Esophagus squamous epithelium (tissue), 5 donors: ENCODE measurements at regions of chr11 and their contacts with region 1.

Region 1: DNA sequence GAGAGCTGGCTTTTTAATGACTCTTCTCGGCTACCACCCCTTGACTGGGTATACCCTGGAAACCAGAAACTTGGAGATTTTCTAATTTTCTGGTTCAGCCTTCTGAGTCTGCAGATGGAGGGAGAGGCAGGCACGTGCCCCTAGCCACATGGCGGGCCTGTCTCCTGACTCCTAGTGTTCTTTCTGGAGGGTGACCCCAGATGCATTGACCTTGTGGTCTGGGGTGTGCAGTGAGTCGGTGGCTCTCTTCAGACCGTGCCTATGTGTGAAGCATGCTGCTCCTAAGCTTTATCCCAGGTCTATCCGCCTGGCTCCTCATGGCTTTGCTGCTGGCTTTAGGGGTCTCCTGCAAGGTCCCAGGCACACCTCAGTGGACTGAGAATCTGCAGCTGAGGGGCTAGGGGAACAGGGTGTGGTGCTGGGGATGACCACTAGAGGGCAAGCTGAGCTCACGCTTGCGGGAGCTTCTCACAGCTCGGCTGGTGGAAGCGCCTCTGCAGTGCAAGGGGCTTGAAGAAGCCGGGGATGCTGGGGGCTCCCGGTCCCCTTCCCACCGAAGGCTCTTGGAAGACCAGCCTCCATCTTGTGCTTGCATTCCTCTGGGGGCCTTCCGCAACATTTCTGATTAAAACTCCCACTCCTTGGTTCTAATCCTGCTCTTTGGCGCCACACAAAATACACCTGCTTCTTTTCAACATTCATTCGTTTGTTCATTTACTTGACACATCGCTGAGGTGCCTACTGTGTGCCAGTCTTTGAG is 51.8 kb downstream of the OTOG start:
- DNase-seq: no peak
- H3K4me3 ChIP-seq: no peak overlapping the region
- H3K27ac ChIP-seq: no peak overlapping the region
- H3K4me1 ChIP-seq: no peaks in the 10 kb centered on the region
- H3K27me3 ChIP-seq: peaks cover 0 to 42% (median 0%) of the 10 kb centered on the region in 4 donors
- CTCF ChIP-seq: peak; percentile 70 to 91 (median 80)
- POLR2A ChIP-seq: no peak

Region 2: GRCh38 chr11:17722000-17722643 is 123.2 kb after region 1 on chr11:
- intact Hi-C with region 1: loop called (anchors 10 kb)
- DNase-seq: no peak
- H3K4me3 ChIP-seq: no peak overlapping the region
- H3K27ac ChIP-seq: no peak overlapping the region
- H3K4me1 ChIP-seq: peaks cover 4 to 37% (median 8%) of the 10 kb centered on the region in 3 donors
- H3K27me3 ChIP-seq: peaks cover 20 to 87% (median 23%) of the 10 kb centered on the region in 4 donors
- CTCF ChIP-seq: peak in 3 of 6 experiments; percentile 3 to 54 (median 14)
- POLR2A ChIP-seq: no peak